ENCODE measurements at regions of chr10 and their contacts with region 1.

Region 1: GRCh38 chr10:71569775-71570588 is 149.6 kb downstream of the C10orf105 start:
- DNase-seq: peak; percentile 53
- ATAC-seq: peak; percentile 75
- H3K4me3 ChIP-seq: no peak overlapping the region
- H3K27ac ChIP-seq: no peak overlapping the region
- H3K4me1 ChIP-seq: no peaks in the 10 kb centered on the region
- H3K27me3 ChIP-seq: peaks cover 3 to 27% of the 10 kb centered on the region in 2 experiments; a peak in 3 of 5 replicates
- CTCF ChIP-seq: peak; percentile 82
- EP300 ChIP-seq: no peak
- POLR2A ChIP-seq: no peak
- RAD21 ChIP-seq: peak; percentile 70

Region 2: DNA sequence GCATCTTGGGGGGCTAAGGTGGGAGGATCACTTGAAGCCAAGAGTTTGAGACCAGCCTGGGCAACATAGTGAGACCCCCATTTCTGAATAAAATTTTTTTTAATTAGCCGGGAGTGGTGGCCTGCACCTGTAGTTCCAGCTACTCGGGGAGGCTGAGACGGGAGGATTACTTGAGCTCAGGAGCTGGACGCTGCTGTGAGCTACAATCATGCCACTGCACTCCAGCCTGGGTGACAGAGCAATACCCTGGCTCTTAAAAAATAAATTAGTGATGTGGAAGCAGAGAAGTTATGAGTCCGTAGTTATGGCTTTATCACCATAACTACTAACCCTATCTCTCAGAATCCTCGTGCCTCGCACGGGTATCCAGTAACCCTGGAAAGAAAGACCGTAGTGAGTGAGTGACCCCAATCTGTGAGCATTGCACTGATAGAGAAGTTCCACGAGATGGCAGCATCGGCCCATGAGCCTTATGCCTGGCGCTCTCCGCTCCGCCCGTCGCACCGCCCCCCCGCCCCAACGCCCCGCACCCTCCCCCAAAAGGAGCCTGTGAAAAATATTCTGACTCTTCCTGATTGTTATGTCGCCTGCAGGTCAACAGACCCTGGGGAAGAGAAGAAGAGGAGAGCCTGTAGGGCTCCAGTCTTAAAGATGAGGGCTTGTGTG is 255.8 kb before region 1 on chr10:
- CTCF ChIA-PET with region 1: interaction called, 29 read pairs
- POLR2A ChIA-PET with region 1: no interaction called
- in situ Hi-C with region 1: loop called (anchors 5 kb)
- intact Hi-C with region 1: loop called (anchors 1 kb)
- DNase-seq: no peak
- ATAC-seq: peak; percentile 30; the same call in 2 of the 3 replicates
- H3K4me3 ChIP-seq: no peak overlapping the region
- H3K27ac ChIP-seq: no peak overlapping the region
- H3K4me1 ChIP-seq: 0 out of 2 replicates have a peak, but pooled peaks cover 5% of the 10 kb centered on the region
- H3K27me3 ChIP-seq: peaks cover 1 to 15% of the 10 kb centered on the region in 2 experiments; a peak in 2 of 5 replicates
- CTCF ChIP-seq: peak; percentile 75
- EP300 ChIP-seq: no peak
- POLR2A ChIP-seq: no peak
- RAD21 ChIP-seq: peak; percentile 57

Measured in HepG2 (cell line).